ENCODE measurements at regions of chr2 and their contacts with region 1.

Region 1: GRCh38 chr2:20225294-20226151 is 593 bp upstream of the SDC1 start:
- DNase-seq: peak; percentile 82
- H3K4me3 ChIP-seq: peak overlapping the region; percentile 49 to 62
- H3K27ac ChIP-seq: peak overlapping the region; percentile 86 to 87
- H3K4me1 ChIP-seq: no peaks in the 10 kb centered on the region
- H3K27me3 ChIP-seq: no peaks in the 10 kb centered on the region
- CTCF ChIP-seq: peak; percentile 58 to 87 (median 82)
- POLR2A ChIP-seq: peak; percentile 28

Region 2: GRCh38 chr2:20135631-20136050 is 89.9 kb before region 1 on chr2:
- intact Hi-C with region 1: loop called (anchors 2 kb)
- DNase-seq: peak; percentile 68
- H3K4me3 ChIP-seq: no peak overlapping the region
- H3K27ac ChIP-seq: no peak overlapping the region
- H3K4me1 ChIP-seq: no peaks in the 10 kb centered on the region
- H3K27me3 ChIP-seq: no peaks in the 10 kb centered on the region
- CTCF ChIP-seq: peak; percentile 61 to 88 (median 74)
- POLR2A ChIP-seq: no peak

Region 3: DNA sequence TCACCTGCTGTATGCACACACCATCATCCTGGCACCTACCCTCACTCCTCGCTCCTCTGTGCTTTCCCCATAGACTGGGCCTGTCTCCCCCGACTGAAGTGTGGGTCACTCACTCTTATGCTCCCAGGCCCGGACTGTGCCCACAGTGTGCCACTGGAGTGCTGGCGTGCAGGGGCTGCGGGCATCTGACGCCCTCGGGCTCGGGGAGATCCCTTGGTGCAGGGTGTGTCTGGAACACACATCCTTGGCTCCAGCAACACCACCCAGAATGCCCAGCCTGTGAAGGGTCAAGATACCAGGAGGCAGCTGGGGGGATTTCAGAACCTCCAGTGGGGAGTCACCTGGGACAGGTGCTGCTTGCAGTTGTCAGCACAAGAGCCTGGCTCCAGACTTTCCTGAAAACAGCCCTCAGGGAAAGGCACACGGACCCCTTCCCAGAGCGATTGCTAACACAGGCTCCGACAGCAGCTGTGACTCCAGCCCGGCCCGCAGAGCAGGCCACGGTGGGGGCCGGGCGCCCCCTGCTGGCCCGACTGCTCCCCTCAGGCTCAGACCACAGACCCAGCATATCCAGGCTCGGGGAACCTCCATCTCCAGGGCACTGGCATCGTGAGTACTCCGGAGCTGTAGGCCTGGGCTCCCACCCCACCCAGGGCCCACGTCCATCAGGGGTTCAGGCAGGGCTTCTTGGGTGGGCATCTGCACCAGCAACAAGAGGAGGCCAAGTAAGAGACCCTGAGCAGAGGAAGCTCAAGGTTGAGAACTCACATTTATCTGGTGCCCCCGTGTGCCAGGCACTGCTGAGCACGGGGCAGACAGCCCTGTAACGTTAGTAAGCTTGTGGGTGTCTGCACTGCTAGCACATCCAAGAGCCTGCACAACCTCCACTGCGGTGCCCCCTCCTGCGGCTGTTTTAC is 416.8 kb after region 1 on chr2:
- intact Hi-C with region 1: loop called (anchors 10 kb)
- DNase-seq: peak; percentile 76
- H3K4me3 ChIP-seq: no peak overlapping the region
- H3K27ac ChIP-seq: peak overlapping the region; percentile 66 to 90
- H3K4me1 ChIP-seq: peaks cover 11% of the 10 kb centered on the region
- H3K27me3 ChIP-seq: no peaks in the 10 kb centered on the region
- CTCF ChIP-seq: peak; percentile 82 to 97 (median 96)
- POLR2A ChIP-seq: no peak